Cardiac septum (tissue), 1 donor: ENCODE measurements at regions of chr11 and their contacts with region 1.

Region 1: DNA sequence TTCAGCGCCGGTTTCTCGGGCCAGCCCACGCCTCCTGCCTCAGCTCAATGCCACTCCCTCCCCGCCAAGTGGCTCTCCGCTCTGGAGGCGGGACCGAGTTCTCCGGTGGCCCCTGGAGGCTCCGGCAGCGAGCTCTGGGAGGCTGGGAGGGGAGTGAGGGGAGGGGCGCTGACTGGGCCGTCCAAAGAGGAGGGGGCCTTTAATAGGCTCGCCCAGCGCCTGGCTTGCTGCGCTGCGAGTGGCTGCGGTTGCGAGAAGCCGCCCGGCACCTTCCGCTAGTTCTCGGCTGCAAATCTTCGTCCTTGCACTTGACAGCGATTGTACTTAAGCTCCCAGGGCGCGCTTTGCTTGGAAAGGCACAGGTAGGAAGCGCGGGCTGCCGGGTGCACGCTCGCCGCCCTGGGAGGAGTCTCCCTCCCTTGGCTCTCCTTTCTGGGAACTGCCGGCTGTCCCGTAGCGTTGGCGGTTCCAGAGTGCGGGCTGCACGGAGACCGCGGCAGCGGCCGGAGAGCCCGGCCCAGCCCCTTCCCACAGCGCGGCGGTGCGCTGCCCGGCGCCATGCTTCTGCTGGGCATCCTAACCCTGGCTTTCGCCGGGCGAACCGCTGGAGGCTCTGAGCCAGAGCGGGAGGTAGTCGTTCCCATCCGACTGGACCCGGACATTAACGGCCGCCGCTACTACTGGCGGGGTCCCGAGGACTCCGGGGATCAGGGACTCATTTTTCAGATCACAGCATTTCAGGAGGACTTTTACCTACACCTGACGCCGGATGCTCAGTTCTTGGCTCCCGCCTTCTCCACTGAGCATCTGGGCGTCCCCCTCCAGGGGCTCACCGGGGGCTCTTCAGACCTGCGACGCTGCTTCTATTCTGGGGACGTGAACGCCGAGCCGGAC is at the start of gene ADAMTS15:
- DNase-seq: peak; percentile 91
- total RNA-seq, gene ADAMTS15: 8.5 TPM

Region 2: DNA sequence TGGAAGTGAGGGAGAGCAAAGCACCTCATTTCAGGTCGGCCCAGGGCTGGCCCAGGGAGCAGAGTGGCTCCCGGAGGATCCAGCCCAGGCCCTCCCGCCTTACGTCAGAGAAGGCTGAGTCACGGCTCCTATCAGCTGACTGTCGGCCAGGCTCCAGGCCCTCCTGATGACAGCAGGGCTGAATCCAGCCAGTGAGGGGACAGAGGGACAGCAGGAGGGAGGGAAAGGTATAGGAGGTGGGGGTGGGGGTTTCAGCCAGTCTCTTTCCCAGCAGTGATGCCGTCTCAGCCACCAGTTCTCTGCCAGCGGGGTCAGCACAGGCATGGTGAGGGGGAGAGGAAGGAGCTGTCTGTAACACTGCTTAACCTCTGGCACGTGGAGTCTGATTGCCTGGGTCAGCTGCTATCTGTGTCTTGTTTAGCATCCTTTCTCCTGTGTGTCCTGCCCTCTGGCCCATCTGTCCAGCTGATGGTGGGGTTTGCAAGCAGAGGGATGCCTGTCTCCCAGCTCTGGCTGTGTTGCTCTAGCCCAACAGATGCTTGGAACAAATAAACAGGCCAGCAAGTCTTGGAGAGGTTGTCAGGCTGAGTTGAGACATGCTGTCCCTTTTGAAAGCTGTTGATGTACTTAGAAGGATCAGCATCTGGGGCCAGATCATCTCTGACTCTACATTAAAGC is 73.8 kb after region 1 on chr11:
- intact Hi-C with region 1: loop called (anchors 1 kb)
- DNase-seq: peak; percentile 95

Region 3: DNA sequence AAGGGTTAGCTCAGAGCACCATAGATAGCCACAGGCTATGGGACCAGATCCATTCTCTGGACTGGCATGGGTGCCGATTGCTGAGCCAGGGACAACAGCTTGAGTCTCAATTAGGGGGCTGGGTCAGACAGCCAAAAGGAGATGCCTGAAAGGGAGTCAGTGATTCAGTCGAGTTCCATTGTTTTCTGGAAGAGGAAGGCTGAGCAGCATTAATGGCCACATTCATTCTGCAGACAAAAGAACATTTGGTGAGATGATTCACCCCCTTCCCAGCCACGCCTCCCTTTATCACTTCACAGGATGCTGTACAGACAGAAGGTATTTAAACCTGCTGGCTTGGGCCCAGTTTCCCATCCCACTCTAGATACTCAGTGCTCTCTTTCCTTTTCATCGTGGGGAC is 131.7 kb after region 1 on chr11:
- intact Hi-C with region 1: loop called (anchors 5 kb)
- DNase-seq: no peak

Region 4: GRCh38 chr11:130653838-130654636 is 205.4 kb after region 1 on chr11:
- intact Hi-C with region 1: loop called (anchors 2 kb)
- DNase-seq: peak; percentile 89

Region 5: DNA sequence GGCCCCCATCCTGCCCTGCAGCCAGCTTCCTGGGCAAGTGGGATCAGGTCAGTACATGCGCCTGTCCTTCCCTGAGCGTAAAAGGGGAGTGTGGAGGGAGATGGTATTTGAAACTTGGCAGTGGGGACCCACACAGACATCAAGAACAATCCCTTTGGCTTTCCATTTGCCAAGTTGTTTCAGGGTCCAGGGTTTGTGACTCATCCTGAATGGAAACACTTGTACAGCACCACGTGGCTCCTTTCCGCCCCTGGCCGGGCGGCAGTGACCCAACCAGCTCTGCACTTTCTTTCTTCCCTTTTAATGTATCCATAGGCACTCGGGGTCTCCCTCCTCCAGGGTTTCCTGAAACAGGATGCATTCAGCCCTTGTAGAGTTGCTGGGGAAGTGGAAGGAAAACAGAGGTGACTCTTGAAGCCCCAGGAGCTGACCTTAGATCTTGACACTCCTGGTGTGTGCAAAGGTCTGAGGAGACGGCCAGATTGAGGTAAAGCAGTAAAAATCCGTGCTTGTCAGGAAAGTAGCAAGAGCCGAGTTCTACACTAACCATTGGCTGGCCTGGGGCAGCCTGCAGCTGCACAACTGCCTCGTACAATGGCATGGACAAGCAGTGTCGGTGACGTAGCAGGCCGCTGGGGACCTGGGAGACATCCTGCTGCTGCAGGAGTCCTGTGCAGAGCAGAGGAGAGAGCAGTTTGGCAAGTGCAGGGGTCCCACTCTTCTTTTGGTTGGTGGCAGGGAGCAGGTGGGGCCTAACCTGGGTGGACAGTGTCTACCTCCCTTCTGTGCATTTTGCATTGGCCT is 277.8 kb after region 1 on chr11:
- intact Hi-C with region 1: loop called (anchors 5 kb)
- DNase-seq: no peak

Region 6: DNA sequence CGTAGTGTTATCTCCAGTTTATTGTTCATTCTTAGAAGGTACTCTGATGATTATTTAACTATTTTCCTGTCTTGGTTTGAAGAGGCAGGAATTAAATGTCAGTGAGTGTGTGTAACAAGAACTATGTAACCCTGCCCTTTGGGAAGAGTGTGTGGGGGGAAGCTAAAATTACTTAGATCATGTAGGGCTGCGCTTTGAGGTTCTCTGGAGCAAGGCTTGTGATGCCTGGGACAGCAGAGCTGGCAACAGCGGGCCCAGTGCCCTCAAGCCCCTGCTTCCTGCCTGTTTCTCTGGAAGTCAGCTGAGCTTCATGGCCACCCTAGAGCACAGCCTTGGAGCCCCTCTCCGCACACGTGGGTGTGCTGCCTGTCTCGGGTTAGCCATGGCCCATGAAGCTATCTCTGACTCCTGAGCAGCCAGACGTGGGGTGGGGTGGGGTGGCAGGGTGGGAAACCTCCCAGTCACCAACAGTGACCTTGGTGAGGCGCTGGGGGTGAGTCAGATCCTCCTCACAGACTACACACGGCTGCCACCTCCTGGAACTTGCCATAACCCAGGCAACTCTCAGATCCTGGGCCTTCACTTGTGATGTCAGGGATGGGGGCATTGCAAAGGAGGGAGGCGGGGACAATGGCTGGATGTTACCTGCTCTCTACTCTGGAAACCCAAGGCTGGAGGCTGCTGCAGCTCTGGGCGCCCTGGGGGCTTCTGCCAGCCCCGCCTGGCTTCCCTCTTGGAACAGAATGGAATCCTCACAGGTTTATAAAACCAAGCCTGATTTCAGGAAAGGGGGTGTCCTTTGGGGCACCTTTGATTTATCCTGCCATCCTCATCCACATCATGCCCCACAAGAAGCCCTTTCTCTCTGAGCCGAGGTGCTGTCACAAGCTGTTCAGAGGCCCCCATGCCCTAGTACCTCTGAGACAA is 379.1 kb after region 1 on chr11:
- intact Hi-C with region 1: loop called (anchors 5 kb)
- DNase-seq: no peak